ENCODE measurements at regions of chr21 and their contacts with region 1.

Region 1: GRCh38 chr21:34603002-34603709 is 11.8 kb downstream of the RCAN1 start:
- DNase-seq: peak; percentile 74
- H3K4me3 ChIP-seq: no peak overlapping the region
- H3K27ac ChIP-seq: no peak overlapping the region
- H3K4me1 ChIP-seq: no peaks in the 10 kb centered on the region
- H3K27me3 ChIP-seq: no peaks in the 10 kb centered on the region
- CTCF ChIP-seq: peak; percentile 74 to 88
- POLR2A ChIP-seq: no peak

Region 2: GRCh38 chr21:34367321-34367935 is 235.7 kb before region 1 on chr21:
- CTCF ChIA-PET with region 1: interaction called, 12 read pairs
- POLR2A ChIA-PET with region 1: no interaction called
- dilution Hi-C with region 1: no loop called
- intact Hi-C with region 1: no loop called
- DNase-seq: peak; percentile 55
- H3K4me3 ChIP-seq: no peak overlapping the region
- H3K27ac ChIP-seq: no peak overlapping the region
- H3K4me1 ChIP-seq: no peaks in the 10 kb centered on the region
- H3K27me3 ChIP-seq: peaks cover 11 to 12% of the 10 kb centered on the region in 2 experiments
- CTCF ChIP-seq: peak; percentile 46 to 53
- POLR2A ChIP-seq: no peak

Region 3: DNA sequence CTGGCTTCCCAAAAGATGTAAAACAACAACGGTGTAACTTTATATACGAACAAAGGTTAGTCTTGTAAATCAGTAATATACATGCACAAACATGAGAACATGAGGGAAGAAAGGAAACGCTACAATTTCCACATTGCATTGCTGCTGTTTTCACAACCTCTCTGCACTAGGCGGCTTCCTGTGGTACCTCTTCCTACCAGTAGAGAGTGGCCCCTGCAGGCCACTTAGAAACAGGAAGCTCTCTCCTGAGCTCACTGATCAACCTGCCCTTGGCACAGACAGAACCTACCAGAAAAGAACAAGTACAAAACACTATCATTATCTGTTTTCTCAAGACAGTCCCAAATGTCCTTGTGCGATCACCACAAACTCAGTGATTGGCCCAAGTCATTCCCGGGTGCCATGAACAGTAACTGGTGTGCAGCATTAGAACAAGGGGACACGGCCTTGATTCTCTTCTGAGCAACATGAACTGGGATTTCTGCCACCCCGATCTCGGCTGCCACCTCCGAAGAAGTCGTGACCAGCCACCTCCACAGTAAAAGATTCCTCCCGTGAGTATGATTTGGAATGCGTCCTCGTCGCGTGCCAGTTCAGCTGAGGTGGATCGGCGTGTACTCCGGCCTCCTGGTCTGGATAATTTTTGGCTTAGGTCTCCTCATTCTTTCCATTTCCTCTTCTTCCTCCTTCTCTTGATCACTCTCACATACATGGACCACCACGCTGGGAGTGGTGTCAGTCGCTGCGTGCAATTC is 85.5 kb before region 1 on chr21:
- CTCF ChIA-PET with region 1: interaction called, 394 read pairs
- POLR2A ChIA-PET with region 1: no interaction called
- dilution Hi-C with region 1: no loop called
- intact Hi-C with region 1: no loop called
- DNase-seq: peak; percentile 22
- H3K4me3 ChIP-seq: no peak overlapping the region
- H3K27ac ChIP-seq: no peak overlapping the region
- H3K4me1 ChIP-seq: no peaks in the 10 kb centered on the region
- H3K27me3 ChIP-seq: no peaks in the 10 kb centered on the region
- CTCF ChIP-seq: peak; percentile 14
- POLR2A ChIP-seq: no peak

Region 4: DNA sequence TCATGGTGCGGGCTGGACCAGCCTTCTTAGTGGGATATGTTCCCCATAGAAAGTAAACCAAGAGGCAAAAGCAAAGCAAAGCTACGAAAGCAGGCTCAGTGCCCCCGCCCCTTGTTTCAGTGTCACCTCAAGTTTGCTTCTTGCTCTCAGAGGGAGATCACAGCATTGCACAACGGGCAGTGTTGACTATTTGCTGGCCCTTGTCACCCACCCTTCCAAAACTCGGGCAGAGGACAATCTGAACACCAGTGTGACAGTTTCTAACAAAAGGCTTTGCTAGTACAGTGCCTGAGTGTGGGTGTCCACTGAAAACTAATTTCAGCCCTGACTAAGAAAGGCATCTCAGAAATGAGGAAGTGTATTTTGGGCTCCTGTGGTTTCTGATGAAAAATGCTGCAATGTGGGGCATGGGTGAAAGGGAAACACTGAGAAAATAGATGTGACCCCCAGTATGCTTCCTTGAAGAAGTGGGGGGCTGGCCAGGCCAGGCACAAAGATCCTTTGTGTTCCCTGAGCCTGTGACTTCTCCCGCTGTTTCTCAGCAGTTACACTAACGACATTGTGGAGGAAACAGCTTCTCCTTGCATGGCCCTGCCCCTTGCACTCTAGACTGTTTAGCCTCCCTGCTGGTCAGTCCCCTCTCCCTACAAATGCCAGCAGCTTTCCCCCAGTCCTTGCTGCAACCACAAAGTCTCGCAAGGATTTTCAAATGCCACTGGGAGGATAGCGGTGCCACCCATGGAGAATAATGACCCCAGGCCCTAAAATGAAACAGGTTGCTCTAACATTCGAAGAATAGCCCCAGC is 57.9 kb before region 1 on chr21:
- CTCF ChIA-PET with region 1: interaction called, 16 read pairs
- POLR2A ChIA-PET with region 1: no interaction called
- dilution Hi-C with region 1: no loop called
- intact Hi-C with region 1: no loop called
- DNase-seq: peak; percentile 39
- H3K4me3 ChIP-seq: no peak overlapping the region
- H3K27ac ChIP-seq: no peak overlapping the region
- H3K4me1 ChIP-seq: no peaks in the 10 kb centered on the region
- H3K27me3 ChIP-seq: no peaks in the 10 kb centered on the region
- CTCF ChIP-seq: no peak
- POLR2A ChIP-seq: no peak

Region 5: DNA sequence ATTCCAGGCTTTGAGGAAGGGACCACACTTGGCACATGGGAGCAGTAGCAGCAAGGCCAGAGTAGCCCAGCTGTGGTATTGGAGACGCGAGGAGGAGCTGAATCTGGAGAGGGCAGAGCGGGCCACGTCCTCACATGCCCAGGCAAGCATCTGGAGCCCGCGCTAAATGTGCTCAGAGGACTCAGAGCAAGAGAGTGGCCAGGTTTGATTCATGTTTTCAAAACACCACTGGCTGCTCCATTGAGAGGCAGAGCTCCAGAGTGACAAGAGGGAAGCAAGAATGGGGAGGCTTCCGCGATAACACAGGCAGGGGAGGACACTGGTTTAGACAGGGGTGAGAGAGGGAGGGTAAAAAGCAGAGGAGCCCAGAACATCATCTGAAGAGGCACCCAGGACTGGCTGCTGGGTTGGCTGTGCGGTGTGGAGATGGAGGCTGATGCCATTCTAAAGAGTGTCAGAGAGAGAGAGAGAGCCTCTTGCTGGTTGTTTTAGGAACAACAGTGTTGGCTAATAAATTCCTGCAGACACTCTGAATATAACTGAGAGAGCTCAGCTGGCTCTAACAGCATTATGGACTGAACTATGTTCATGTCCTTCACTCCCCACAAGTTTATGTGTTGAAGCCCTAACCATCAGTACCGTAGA is 20.5 kb before region 1 on chr21:
- CTCF ChIA-PET with region 1: interaction called, 36 read pairs
- POLR2A ChIA-PET with region 1: no interaction called
- dilution Hi-C with region 1: no loop called
- intact Hi-C with region 1: no loop called
- DNase-seq: peak; percentile 49
- H3K4me3 ChIP-seq: no peak overlapping the region
- H3K27ac ChIP-seq: no peak overlapping the region
- H3K4me1 ChIP-seq: no peaks in the 10 kb centered on the region
- H3K27me3 ChIP-seq: no peaks in the 10 kb centered on the region
- CTCF ChIP-seq: peak; percentile 30 to 56
- POLR2A ChIP-seq: no peak

Region 6: DNA sequence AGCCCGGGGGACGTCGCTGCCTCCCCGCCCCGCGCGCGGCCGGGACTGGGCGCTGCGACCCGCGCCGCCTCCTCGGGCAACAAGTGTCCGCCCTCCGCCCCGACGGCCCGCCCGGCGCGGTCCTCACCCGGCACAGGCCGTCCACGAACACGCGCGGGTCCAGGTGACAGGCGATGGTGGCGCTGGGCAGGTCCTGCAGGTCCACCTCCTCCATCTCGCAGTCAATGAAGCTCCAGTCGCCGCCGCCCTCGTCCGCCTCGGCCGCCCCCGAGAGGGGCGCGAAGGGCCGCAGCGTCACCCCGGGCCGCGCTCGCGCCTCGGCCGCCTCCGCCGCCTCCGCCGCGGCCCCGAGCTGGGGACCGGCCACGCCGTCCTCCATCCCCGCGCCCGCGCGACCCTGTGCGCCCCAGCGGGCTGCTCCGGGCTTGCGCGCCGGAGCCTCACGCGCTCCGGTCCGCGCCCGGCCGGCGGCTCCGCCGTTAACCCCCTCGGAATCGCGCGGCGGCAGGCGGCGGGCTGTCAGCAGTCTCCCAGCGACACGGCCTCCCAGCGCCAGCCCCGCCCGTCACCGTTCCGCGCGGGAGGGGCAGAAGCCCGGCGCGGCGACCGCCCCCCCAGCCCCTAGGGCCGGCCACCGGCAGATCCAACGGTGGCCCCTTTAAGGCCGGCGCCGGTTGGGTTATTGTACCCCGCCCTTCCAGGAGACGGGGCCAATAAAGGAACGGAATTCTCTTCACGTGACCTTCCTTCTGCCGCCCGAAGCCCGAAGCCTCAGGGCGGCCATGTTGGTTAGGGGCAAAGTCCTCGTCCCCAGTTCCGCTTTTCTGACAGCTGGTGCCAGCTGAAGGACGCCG is 11.7 kb after region 1 on chr21 and contains the start of gene RCAN1:
- CTCF ChIA-PET with region 1: interaction called, 56 read pairs
- POLR2A ChIA-PET with region 1: no interaction called
- dilution Hi-C with region 1: no loop called
- intact Hi-C with region 1: no loop called
- DNase-seq: peak; percentile 92
- H3K4me3 ChIP-seq: peak within 1 kb of the TSS; percentile 69 to 83 (median 75)
- H3K27ac ChIP-seq: no peak within 1 kb of the TSS
- H3K4me1 ChIP-seq: peaks cover 4% of the 10 kb centered on the region
- H3K27me3 ChIP-seq: peaks cover 7 to 8% of the 10 kb centered on the region in 2 experiments
- CTCF ChIP-seq: no peak
- POLR2A ChIP-seq: no peak
- total RNA-seq, gene RCAN1: 15.9 and 16.5 TPM in 2 replicates

Region 7: GRCh38 chr21:34630536-34631143 is 27.5 kb after region 1 on chr21:
- CTCF ChIA-PET with region 1: interaction called, 29 read pairs
- POLR2A ChIA-PET with region 1: no interaction called
- dilution Hi-C with region 1: no loop called
- intact Hi-C with region 1: loop called (anchors 1 kb)
- DNase-seq: peak; percentile 62
- H3K4me3 ChIP-seq: no peak overlapping the region
- H3K27ac ChIP-seq: no peak overlapping the region
- H3K4me1 ChIP-seq: no peaks in the 10 kb centered on the region
- H3K27me3 ChIP-seq: peaks cover 5 to 14% of the 10 kb centered on the region in 2 experiments
- CTCF ChIP-seq: peak; percentile 54 to 68
- POLR2A ChIP-seq: no peak

Region 8: GRCh38 chr21:34688145-34688544 is 85.0 kb after region 1 on chr21:
- CTCF ChIA-PET with region 1: no interaction called
- POLR2A ChIA-PET with region 1: no interaction called
- dilution Hi-C with region 1: no loop called
- intact Hi-C with region 1: no loop called
- DNase-seq: no peak
- H3K4me3 ChIP-seq: no peak overlapping the region
- H3K27ac ChIP-seq: no peak overlapping the region
- H3K4me1 ChIP-seq: no peaks in the 10 kb centered on the region
- H3K27me3 ChIP-seq: peaks cover 21 to 36% of the 10 kb centered on the region in 2 experiments
- CTCF ChIP-seq: peak in 1 of 2 donors; percentile 23
- POLR2A ChIP-seq: no peak

Region 9: GRCh38 chr21:34722684-34723300 is 119.6 kb after region 1 on chr21:
- CTCF ChIA-PET with region 1: no interaction called
- POLR2A ChIA-PET with region 1: no interaction called
- dilution Hi-C with region 1: no loop called
- intact Hi-C with region 1: no loop called
- DNase-seq: no peak
- H3K4me3 ChIP-seq: no peak overlapping the region
- H3K27ac ChIP-seq: no peak overlapping the region
- H3K4me1 ChIP-seq: no peaks in the 10 kb centered on the region
- H3K27me3 ChIP-seq: peaks cover 6 to 11% of the 10 kb centered on the region in 2 experiments
- CTCF ChIP-seq: peak; percentile 64 to 66
- POLR2A ChIP-seq: no peak

Region 10: GRCh38 chr21:34822942-34823341 is 219.8 kb after region 1 on chr21:
- CTCF ChIA-PET with region 1: no interaction called
- POLR2A ChIA-PET with region 1: no interaction called
- dilution Hi-C with region 1: no loop called
- intact Hi-C with region 1: no loop called
- DNase-seq: no peak
- H3K4me3 ChIP-seq: no peak overlapping the region
- H3K27ac ChIP-seq: no peak overlapping the region
- H3K4me1 ChIP-seq: no peaks in the 10 kb centered on the region
- H3K27me3 ChIP-seq: no peaks in the 10 kb centered on the region
- CTCF ChIP-seq: no peak
- POLR2A ChIP-seq: no peak